ENCODE measurements at regions of chr14 and their contacts with region 1.

Region 1: GRCh38 chr14:42545636-42546035 is 939.0 kb downstream of the LRFN5 start:
- DNase-seq: no peak
- ATAC-seq: no peak
- H3K4me3 Mint-ChIP-seq: no peak overlapping the region
- H3K27ac Mint-ChIP-seq: no peak overlapping the region
- H3K4me1 Mint-ChIP-seq: no peaks in the 10 kb centered on the region
- H3K27me3 Mint-ChIP-seq: no peaks in the 10 kb centered on the region
- CTCF ChIP-seq: no peak

Region 2: GRCh38 chr14:42110166-42110723 is 435.4 kb before region 1 on chr14:
- CTCF ChIA-PET with region 1: no interaction called
- POLR2A ChIA-PET with region 1: no interaction called
- intact Hi-C with region 1: loop called (anchors 1 kb)
- DNase-seq: no peak
- ATAC-seq: peak; percentile 74
- H3K4me3 Mint-ChIP-seq: no peak overlapping the region
- H3K27ac Mint-ChIP-seq: no peak overlapping the region
- H3K4me1 Mint-ChIP-seq: peaks cover 4% of the 10 kb centered on the region
- H3K27me3 Mint-ChIP-seq: no peaks in the 10 kb centered on the region
- CTCF ChIP-seq: no peak

Measured in activated B cell treated with CpG ODN at 0.5 μM for 24 hours (primary cell).